Mammary epithelial cell (primary cell): ENCODE measurements at regions of chr3 and their contacts with region 1.

Region 1: DNA sequence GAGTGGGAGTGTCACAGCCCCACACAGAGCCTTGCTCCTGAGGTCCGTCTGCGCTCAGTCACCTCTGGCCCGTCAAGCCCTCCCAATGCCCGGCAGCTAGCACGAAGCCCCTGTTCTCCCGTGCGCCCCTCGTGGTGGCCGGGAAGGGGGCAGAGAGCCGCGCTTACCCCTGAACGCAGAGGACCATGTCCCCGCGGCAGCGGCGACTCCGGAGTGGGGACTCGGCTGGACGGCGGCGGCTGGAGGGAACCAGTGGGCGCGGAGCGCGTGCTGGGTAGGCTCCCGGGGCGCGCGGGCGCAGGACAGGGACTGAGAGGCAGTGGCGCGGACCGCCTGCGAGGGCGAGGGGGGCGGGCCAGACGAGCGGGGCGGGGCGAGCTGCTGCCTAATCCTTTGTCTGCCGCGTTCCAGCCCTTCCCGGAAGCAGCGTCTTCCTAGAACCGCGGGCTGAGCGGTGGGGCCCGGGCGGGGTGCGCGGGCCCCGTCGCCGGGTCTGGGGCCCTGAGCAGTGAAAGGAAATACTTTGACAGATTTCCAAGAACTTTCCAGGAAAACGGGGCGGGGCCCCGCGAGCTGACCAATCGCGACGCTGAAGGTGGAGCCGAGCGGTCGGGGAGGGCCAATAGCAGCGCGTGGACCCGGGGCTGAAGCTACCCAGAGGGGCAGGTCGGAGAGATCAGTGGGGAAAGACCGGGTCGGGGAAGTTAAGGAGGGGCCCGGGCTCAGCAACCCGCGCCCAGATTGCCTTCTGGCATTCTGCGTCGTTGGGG is at the start of gene CISH:
- DNase-seq: peak; percentile 92
- H3K4me3 ChIP-seq: peak within 1 kb of the TSS; percentile 61 to 82 (median 64)
- H3K27ac ChIP-seq: peak within 1 kb of the TSS; percentile 4
- H3K4me1 ChIP-seq: peaks cover 32% of the 10 kb centered on the region
- H3K27me3 ChIP-seq: no peaks in the 10 kb centered on the region
- CTCF ChIP-seq: peak; percentile 8 to 41
- total RNA-seq, gene CISH: 1.8 to 2.8 TPM

Region 2: DNA sequence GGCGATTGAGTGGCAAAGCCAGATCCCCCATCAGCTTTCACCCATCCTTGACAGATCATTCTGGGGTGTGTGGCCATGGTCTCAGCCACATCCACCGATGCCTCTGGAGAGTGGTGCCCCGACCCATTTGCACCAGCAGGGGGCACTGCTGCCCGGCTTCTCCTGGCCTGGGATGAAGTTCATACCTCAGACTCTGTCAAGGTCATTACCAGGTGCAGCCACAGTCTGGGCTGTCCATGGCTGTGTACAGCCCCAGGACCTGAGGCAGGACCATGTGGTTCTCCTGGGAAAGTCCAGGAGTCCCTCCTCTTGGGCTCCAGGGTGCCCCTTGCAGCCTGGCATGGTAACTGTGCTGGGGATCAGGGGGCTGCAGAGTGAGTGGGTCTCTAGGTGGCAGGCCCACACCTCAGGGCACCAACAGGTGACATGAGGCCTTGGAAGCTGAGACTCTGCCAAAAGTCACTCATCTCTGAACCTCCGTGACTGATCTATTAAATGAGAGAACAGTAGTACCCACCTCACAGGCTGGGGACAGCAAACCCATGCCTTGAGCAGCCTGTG is 175.5 kb before region 1 on chr3:
- CTCF ChIA-PET with region 1: no interaction called
- dilution Hi-C with region 1: no loop called
- in situ Hi-C with region 1: no loop called
- intact Hi-C with region 1: loop called (anchors 1 kb)
- DNase-seq: peak; percentile 33
- H3K4me3 ChIP-seq: no peak overlapping the region
- H3K27ac ChIP-seq: no peak overlapping the region
- H3K4me1 ChIP-seq: no peaks in the 10 kb centered on the region
- H3K27me3 ChIP-seq: no peaks in the 10 kb centered on the region
- CTCF ChIP-seq: peak; percentile 80 to 91

Region 3: GRCh38 chr3:50568947-50569749 is 42.5 kb before region 1 on chr3 and contains the start of gene HEMK1:
- CTCF ChIA-PET with region 1: no interaction called
- dilution Hi-C with region 1: loop called (anchors 5 kb)
- in situ Hi-C with region 1: loop called (anchors 5 kb)
- intact Hi-C with region 1: loop called (anchors 1 kb)
- DNase-seq: peak; percentile 89
- H3K4me3 ChIP-seq: peak within 1 kb of the TSS; percentile 86 to 97 (median 93)
- H3K27ac ChIP-seq: peak within 1 kb of the TSS; percentile 73
- H3K4me1 ChIP-seq: peaks cover 16% of the 10 kb centered on the region
- H3K27me3 ChIP-seq: no peaks in the 10 kb centered on the region
- CTCF ChIP-seq: no peak
- total RNA-seq, gene HEMK1: 14.2 to 23.1 TPM

Region 4: GRCh38 chr3:50652709-50653108 is 41.1 kb after region 1 on chr3:
- CTCF ChIA-PET with region 1: interaction called, 11 read pairs
- dilution Hi-C with region 1: no loop called
- in situ Hi-C with region 1: no loop called
- intact Hi-C with region 1: loop called (anchors 1 kb)
- DNase-seq: peak; percentile 36
- H3K4me3 ChIP-seq: no peak overlapping the region
- H3K27ac ChIP-seq: no peak overlapping the region
- H3K4me1 ChIP-seq: no peaks in the 10 kb centered on the region
- H3K27me3 ChIP-seq: no peaks in the 10 kb centered on the region
- CTCF ChIP-seq: peak; percentile 39 to 63

Region 5: GRCh38 chr3:51099794-51100535 is 488.3 kb after region 1 on chr3:
- CTCF ChIA-PET with region 1: interaction called, 4 read pairs
- dilution Hi-C with region 1: no loop called
- in situ Hi-C with region 1: no loop called
- intact Hi-C with region 1: loop called (anchors 1 kb)
- DNase-seq: peak; percentile 46
- H3K4me3 ChIP-seq: no peak overlapping the region
- H3K27ac ChIP-seq: no peak overlapping the region
- H3K4me1 ChIP-seq: no peaks in the 10 kb centered on the region
- H3K27me3 ChIP-seq: no peaks in the 10 kb centered on the region
- CTCF ChIP-seq: peak; percentile 75 to 84

Region 6: GRCh38 chr3:51371943-51372557 is 760.4 kb after region 1 on chr3:
- CTCF ChIA-PET with region 1: no interaction called
- dilution Hi-C with region 1: no loop called
- in situ Hi-C with region 1: loop called in 1 of 2 experiments (anchors 10 kb)
- intact Hi-C with region 1: loop called (anchors 1 kb)
- DNase-seq: peak; percentile 52
- H3K4me3 ChIP-seq: no peak overlapping the region
- H3K27ac ChIP-seq: no peak overlapping the region
- H3K4me1 ChIP-seq: no peaks in the 10 kb centered on the region
- H3K27me3 ChIP-seq: no peaks in the 10 kb centered on the region
- CTCF ChIP-seq: peak; percentile 70 to 82

Region 7: GRCh38 chr3:51434746-51435327 is 823.2 kb after region 1 on chr3:
- CTCF ChIA-PET with region 1: no interaction called
- dilution Hi-C with region 1: no loop called
- in situ Hi-C with region 1: no loop called
- intact Hi-C with region 1: loop called (anchors 1 kb)
- DNase-seq: peak; percentile 43
- H3K4me3 ChIP-seq: no peak overlapping the region
- H3K27ac ChIP-seq: no peak overlapping the region
- H3K4me1 ChIP-seq: peaks cover 7% of the 10 kb centered on the region
- H3K27me3 ChIP-seq: no peaks in the 10 kb centered on the region
- CTCF ChIP-seq: peak; percentile 85 to 94